Endothelial cell of umbilical vein (primary cell): ENCODE measurements at regions of chr17 and their contacts with region 1.

Region 1: DNA sequence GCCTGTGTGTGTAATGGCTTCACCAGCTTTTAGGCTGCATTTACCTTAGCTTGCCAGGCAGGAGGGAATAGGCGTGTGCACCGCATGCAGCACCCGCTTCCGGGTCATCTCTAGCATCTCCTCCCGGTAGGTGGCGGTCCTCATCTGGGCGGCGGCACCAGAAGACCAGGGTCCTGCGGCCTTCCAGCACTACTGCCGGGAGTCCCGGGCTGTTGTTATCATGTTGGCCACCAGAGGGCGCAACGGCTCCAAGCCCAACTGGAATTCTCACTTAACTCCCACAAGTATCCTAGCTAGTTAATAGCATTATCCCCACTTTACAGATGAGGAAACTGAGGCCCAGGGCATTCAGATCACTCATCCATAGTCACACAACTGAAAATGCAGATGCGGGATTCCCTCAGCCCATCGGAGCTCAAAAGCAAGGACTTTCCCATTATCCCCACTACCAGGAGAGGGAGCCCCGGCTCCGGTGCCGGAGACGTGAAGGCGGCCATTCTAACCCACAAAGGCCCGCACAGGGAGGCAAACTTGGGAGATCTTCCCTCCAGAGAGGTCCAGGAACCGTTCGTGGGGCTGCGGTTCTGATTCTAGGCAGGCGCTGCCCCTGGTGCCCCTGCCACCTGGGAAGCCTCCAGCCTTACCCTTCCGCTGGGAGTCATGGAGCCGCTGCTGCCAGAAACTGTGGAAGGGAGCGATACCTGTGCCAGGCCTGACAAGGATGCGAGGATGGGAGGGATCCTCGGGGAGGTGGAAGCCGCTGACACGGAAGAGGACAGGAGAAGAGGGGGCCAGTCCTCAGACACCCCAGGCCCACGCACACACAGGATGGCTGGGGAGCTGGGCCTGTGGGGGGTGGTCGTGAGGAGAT is 23.9 kb downstream of the LGALS9 start:
- DNase-seq: peak; percentile 66
- H3K4me3 ChIP-seq: no peak overlapping the region
- H3K27ac ChIP-seq: no peak overlapping the region
- H3K4me1 ChIP-seq: no peaks in the 10 kb centered on the region
- H3K27me3 ChIP-seq: no peaks in the 10 kb centered on the region
- CTCF ChIP-seq: peak; percentile 77 to 91
- POLR2A ChIP-seq: no peak

Region 2: GRCh38 chr17:27609611-27610303 is 45.1 kb before region 1 on chr17:
- CTCF ChIA-PET with region 1: interaction called, 150 read pairs
- POLR2A ChIA-PET with region 1: no interaction called
- dilution Hi-C with region 1: no loop called
- intact Hi-C with region 1: loop called (anchors 1 kb)
- DNase-seq: peak; percentile 34
- H3K4me3 ChIP-seq: no peak overlapping the region
- H3K27ac ChIP-seq: no peak overlapping the region
- H3K4me1 ChIP-seq: no peaks in the 10 kb centered on the region
- H3K27me3 ChIP-seq: no peaks in the 10 kb centered on the region
- CTCF ChIP-seq: peak; percentile 35 to 69
- POLR2A ChIP-seq: no peak

Region 3: DNA sequence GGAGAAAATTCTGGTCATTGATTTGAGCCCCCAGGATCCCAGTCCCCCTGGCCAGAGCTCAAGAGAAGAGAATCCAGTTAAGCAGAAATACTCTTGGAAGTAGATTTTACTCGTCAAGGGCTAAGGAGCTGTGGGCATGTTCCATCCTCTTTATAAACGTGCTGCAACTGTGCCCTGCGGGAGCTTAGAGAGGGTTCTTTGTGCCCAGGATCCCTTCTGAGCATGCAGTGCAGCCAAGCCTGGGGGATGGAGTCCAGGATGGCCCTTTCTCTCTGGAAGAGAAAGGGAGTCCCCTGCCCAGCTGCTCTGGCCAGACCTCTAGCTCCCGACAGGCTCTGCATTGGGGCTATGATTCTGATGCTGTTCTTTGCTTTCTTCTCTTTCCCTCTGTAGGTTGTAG is 33.4 kb before region 1 on chr17:
- CTCF ChIA-PET with region 1: interaction called, 13 read pairs
- POLR2A ChIA-PET with region 1: no interaction called
- dilution Hi-C with region 1: no loop called
- intact Hi-C with region 1: no loop called
- DNase-seq: no peak
- H3K4me3 ChIP-seq: no peak overlapping the region
- H3K27ac ChIP-seq: no peak overlapping the region
- H3K4me1 ChIP-seq: peaks cover 13% of the 10 kb centered on the region
- H3K27me3 ChIP-seq: no peaks in the 10 kb centered on the region
- CTCF ChIP-seq: no peak
- POLR2A ChIP-seq: no peak

Region 4: GRCh38 chr17:27760069-27760885 is 105.4 kb after region 1 on chr17:
- CTCF ChIA-PET with region 1: interaction called, 262 read pairs
- POLR2A ChIA-PET with region 1: no interaction called
- dilution Hi-C with region 1: no loop called
- intact Hi-C with region 1: loop called (anchors 1 kb)
- DNase-seq: peak; percentile 38
- H3K4me3 ChIP-seq: no peak overlapping the region
- H3K27ac ChIP-seq: no peak overlapping the region
- H3K4me1 ChIP-seq: no peaks in the 10 kb centered on the region
- H3K27me3 ChIP-seq: no peaks in the 10 kb centered on the region
- CTCF ChIP-seq: peak; percentile 75 to 84
- POLR2A ChIP-seq: no peak